PC-3 (cell line): ENCODE measurements at regions of chr4 and their contacts with region 1.

Region 1: GRCh38 chr4:104772849-104773248 is 278.2 kb upstream of the CXXC4 start:
- DNase-seq: peak; percentile 2
- ATAC-seq: no peak
- H3K4me3 ChIP-seq: peak overlapping the region; percentile 15; the same call in 1 of the 2 replicates
- H3K27ac ChIP-seq: peak overlapping the region; percentile 26
- H3K4me1 ChIP-seq: peaks cover 29% of the 10 kb centered on the region
- H3K27me3 ChIP-seq: no peaks in the 10 kb centered on the region
- CTCF ChIP-seq: no peak

Region 2: DNA sequence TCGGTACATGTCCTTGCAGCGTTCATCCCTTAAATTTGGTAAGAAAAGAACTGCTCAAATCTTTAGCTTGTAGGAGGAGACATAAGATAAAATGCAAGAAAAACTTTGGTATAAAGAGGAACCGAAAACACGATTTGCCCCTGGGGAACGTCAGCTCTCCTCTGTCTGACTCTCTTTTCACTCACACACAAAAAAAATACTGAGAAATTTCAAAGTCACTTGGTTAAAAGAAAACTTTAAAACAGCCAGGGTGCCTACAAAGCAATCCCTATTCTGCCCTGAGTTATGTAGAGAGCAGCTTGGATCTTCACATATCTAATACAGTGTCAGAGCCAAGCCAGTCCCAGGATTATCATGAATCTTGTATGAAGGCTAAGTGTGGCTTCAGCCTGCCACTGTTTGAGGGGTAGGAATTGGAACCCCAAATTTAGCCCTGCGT is 29.6 kb before region 1 on chr4:
- CTCF ChIA-PET with region 1: no interaction called
- POLR2A ChIA-PET with region 1: no interaction called
- intact Hi-C with region 1: loop called (anchors 1 kb)
- DNase-seq: no peak
- ATAC-seq: no peak
- H3K4me3 ChIP-seq: no peak overlapping the region
- H3K27ac ChIP-seq: no peak overlapping the region
- H3K4me1 ChIP-seq: peaks cover 16% of the 10 kb centered on the region
- H3K27me3 ChIP-seq: no peaks in the 10 kb centered on the region
- CTCF ChIP-seq: no peak

Region 3: DNA sequence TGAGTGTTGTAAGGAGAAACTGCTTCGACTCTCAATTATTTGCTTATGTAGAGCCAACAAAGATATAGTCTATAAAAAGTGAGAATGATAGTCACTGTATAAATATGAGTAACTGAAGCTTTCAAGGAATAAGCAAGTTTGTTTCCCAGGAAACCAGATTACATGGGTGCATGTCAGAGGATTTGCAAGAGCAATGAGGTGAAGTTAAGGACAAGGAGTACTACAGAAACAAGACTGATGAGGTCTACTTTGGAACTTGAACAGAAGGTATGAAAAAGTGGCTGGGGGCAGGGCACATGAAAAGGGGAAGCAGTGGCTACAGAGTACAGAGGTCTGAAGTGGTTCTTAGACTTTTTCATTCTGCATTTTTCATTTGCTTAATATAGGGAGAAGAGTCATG is 42.8 kb after region 1 on chr4:
- CTCF ChIA-PET with region 1: no interaction called
- POLR2A ChIA-PET with region 1: no interaction called
- intact Hi-C with region 1: loop called (anchors 1 kb)
- DNase-seq: peak; percentile 66
- ATAC-seq: peak; percentile 97
- H3K4me3 ChIP-seq: no peak overlapping the region
- H3K27ac ChIP-seq: no peak overlapping the region
- H3K4me1 ChIP-seq: peaks cover 13% of the 10 kb centered on the region
- H3K27me3 ChIP-seq: no peaks in the 10 kb centered on the region
- CTCF ChIP-seq: no peak

Region 4: DNA sequence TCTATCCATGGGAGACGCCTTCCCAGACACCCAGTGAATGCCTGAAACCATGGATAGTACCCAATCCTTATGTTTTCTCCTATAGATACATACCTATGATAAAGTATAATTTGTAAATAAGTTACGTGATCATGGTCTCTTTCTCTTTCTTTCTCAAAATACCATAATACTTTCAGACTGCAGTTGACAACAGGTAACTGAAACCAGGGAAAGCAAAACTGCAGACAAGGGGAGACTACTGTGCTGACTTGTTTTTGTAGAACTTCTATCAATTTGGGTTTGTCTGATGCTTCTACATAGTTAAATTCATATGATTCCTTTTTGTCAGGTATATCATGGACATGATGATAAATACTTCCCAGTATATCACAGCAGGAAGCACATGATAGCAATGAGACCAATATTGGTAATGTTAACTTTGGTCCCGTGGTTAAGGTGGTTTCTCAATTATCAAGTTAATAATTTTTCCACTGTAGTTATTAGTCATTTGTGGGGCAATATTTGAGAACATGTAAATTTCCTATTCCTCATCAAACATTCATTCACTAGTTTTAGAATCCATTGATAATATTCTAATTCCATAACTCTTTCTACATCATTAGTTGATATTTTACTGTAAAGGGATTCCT is 75.9 kb after region 1 on chr4:
- CTCF ChIA-PET with region 1: no interaction called
- POLR2A ChIA-PET with region 1: no interaction called
- intact Hi-C with region 1: no loop called
- DNase-seq: no peak
- ATAC-seq: no peak
- H3K4me3 ChIP-seq: no peak overlapping the region
- H3K27ac ChIP-seq: no peak overlapping the region
- H3K4me1 ChIP-seq: no peaks in the 10 kb centered on the region
- H3K27me3 ChIP-seq: no peaks in the 10 kb centered on the region
- CTCF ChIP-seq: no peak